ENCODE measurements at regions of chr5 and their contacts with region 1.

Region 1: DNA sequence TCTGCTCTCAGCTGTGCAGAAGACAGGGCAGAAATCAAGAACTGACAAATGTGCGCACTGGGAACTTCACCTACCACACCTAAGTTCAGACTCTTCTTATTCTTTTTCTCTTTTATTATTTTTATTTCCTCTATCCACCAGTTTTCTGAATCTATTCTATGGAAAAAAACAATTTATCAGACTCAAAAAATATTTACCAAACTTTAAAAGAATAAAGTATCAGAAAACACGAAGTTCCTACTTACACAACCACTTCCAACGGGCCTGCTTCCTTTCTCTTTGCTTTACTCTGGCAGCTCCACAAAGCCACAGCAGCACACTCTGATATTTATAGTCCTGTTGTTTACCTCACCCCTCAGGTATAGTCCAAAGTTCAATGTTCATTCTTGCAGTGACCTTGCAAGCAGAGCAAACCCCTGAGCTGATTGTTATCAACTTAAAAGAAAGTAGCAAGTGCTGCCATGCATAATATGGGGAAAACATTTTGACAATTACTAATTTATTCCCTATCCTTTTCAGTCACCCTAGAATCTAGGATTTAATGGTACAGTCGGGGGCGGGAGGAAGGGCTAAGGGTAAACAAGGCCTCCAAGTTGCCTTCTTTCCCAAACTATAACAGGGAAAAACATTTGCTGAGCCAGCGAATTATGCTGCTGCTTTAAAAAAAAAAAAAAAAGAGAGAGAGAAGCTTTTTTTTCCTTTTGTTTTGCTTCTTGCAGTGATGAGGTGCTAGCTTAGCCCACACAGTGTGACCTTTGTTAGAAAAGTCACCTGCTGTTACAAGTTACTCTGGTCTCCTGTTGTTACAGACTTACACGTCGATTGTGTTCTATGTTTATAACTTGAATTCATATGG is at the start of gene SELENOP:
- DNase-seq: peak; percentile 8
- ATAC-seq: peak; percentile 57; the same call in 2 of the 3 replicates
- H3K4me3 ChIP-seq: no peak within 1 kb of the TSS
- H3K27ac ChIP-seq: no peak within 1 kb of the TSS
- H3K4me1 ChIP-seq: no peaks in the 10 kb centered on the region
- H3K27me3 ChIP-seq: no peaks in the 10 kb centered on the region
- CTCF ChIP-seq: no peak
- EP300 ChIP-seq: no peak
- POLR2A ChIP-seq: no peak
- RAD21 ChIP-seq: no peak
- polyA plus RNA-seq, gene SELENOP: 0.08 to 0.60 TPM

Region 2: GRCh38 chr5:42800748-42801330 is 11.0 kb before region 1 on chr5:
- CTCF ChIA-PET with region 1: interaction called, 5 read pairs
- POLR2A ChIA-PET with region 1: interaction called, 9 read pairs
- RAD21 ChIA-PET with region 1: interaction called, 8 read pairs
- SMC1A ChIA-PET with region 1: interaction called, 12 read pairs
- in situ Hi-C with region 1: no loop called
- intact Hi-C with region 1: no loop called
- DNase-seq: no peak
- ATAC-seq: no peak
- H3K4me3 ChIP-seq: no peak overlapping the region
- H3K27ac ChIP-seq: no peak overlapping the region
- H3K4me1 ChIP-seq: no peaks in the 10 kb centered on the region
- H3K27me3 ChIP-seq: no peaks in the 10 kb centered on the region
- CTCF ChIP-seq: no peak
- EP300 ChIP-seq: no peak
- POLR2A ChIP-seq: no peak
- RAD21 ChIP-seq: no peak

Region 3: DNA sequence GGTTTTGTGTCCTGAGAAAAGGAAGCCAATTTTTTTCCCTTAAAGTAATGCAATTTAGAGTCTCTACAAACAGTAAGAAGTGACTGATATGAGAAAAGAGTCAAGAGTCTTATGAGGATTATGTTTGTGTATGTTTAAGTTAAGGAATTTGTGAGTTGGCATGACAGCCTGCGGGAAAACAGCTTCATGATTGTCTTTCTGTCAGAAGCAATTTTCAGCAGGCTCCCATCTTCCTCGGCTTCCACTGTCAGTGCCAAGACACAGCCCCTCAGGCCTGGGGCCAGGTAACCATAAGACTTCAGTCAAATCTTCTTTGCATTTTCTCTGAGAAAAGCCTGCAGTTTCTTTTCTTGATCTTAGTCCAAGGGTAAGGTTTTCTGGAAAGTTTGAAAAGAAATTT is 16.9 kb after region 1 on chr5:
- CTCF ChIA-PET with region 1: interaction called, 3 read pairs
- POLR2A ChIA-PET with region 1: interaction called, 6 read pairs
- RAD21 ChIA-PET with region 1: interaction called, 5 read pairs
- SMC1A ChIA-PET with region 1: interaction called, 34 read pairs
- in situ Hi-C with region 1: no loop called
- intact Hi-C with region 1: no loop called
- DNase-seq: no peak
- ATAC-seq: no peak
- H3K4me3 ChIP-seq: no peak overlapping the region
- H3K27ac ChIP-seq: no peak overlapping the region
- H3K4me1 ChIP-seq: no peaks in the 10 kb centered on the region
- H3K27me3 ChIP-seq: no peaks in the 10 kb centered on the region; a peak in 1 of 4 replicates
- CTCF ChIP-seq: no peak
- EP300 ChIP-seq: no peak
- POLR2A ChIP-seq: no peak
- RAD21 ChIP-seq: no peak

Region 4: DNA sequence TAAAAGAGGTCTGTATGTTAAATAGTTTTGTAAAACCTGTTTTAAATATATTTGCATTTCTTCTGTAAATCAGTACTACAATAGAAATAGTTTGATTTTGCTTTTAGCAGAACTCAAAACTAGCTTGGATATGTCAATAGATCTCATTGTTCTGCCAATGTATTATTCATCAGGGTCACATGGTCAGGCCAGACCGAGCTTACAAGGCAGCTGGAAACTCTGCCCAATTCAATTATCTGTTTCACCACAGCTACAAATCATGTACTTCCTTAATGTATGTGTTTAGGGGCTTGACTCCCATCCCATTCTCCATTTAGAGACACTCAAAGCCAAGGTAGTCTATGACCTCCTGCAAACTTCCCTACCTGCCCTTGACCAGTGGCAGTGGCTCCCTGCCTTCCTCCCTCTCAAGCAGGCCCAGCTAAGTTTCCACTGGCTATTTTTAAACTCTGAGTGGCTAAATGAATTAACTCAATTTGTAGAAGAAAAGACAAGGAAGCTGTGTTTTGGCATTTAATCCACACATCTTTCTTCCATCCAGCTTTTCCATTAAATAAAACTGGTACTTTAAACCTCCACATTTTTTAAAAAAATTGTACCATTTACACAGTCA is 46.3 kb after region 1 on chr5:
- CTCF ChIA-PET with region 1: no interaction called
- POLR2A ChIA-PET with region 1: no interaction called
- RAD21 ChIA-PET with region 1: interaction called, 8 read pairs
- SMC1A ChIA-PET with region 1: interaction called, 14 read pairs
- in situ Hi-C with region 1: no loop called
- intact Hi-C with region 1: no loop called
- DNase-seq: no peak
- ATAC-seq: no peak
- H3K4me3 ChIP-seq: no peak overlapping the region
- H3K27ac ChIP-seq: no peak overlapping the region
- H3K4me1 ChIP-seq: no peaks in the 10 kb centered on the region
- H3K27me3 ChIP-seq: no peaks in the 10 kb centered on the region
- CTCF ChIP-seq: no peak
- EP300 ChIP-seq: no peak
- POLR2A ChIP-seq: no peak
- RAD21 ChIP-seq: no peak

Region 5: DNA sequence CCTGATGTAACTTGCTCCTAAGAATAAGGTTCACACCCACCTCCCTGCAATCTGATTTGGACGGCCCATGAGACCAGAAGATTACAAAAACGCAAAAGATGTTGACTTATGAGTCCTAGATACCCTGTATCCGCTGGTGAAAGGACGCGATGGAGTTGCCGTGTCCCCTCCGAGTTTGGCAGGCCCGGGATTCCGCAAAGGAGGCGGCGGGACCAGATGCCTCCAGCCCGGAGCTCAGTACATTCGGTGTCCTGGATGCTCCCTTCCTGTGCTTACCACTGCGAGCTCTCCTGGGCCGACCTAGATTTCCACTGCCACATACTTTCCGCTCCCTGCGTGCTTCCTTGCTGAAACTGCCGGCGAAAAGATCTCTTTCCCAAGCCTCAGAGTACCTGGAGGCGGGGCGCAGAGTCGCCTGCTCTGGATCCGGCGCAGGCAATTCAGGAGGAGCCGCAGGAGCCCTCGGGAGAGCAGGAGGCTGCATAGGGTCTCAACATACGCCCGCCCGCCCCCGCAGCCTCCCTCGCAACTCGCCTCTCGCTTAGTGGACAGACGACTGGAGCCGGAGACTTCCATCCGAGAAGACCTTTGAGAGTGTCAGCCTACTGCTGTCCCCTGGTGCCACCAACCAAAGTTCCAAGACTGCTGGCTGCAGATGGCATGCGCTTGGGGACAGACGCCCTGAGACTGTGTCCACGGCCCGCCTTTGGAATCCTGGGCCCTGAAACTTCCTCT is 188.5 kb after region 1 on chr5:
- CTCF ChIA-PET with region 1: no interaction called
- POLR2A ChIA-PET with region 1: no interaction called
- RAD21 ChIA-PET with region 1: no interaction called
- SMC1A ChIA-PET with region 1: no interaction called
- in situ Hi-C with region 1: no loop called
- intact Hi-C with region 1: no loop called
- DNase-seq: no peak
- ATAC-seq: no peak
- H3K4me3 ChIP-seq: no peak overlapping the region
- H3K27ac ChIP-seq: no peak overlapping the region
- H3K4me1 ChIP-seq: peaks cover 2% of the 10 kb centered on the region
- H3K27me3 ChIP-seq: no peaks in the 10 kb centered on the region
- CTCF ChIP-seq: no peak
- EP300 ChIP-seq: no peak
- POLR2A ChIP-seq: no peak
- RAD21 ChIP-seq: no peak

Measured in GM12878 (cell line).